BJ (cell line): ENCODE measurements at regions of chr12 and their contacts with region 1.

Region 1: DNA sequence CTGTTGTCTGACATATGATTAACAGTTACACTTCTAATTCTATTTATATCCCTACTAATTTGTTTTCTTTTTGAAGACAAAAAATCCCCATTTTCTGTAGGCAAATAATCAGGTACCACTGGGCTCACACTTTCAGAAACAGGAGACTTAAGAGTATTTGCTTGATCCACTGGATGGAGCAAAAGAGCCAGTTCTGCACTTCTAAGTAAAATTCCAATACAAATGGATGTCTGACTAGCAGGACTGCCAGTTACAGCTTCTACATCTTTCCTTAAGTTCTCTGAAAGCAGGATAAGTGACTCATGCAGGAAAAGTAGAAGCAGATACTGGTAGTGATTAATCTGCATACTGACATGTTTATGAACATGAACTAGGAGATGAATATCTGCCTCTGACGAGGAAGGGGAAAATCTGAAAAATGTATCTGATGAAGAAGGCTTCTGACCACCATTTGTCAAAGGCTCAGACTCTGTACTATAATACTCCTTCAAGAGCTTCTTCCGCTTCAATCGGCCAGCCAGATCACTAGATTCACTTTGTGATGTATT is 73.8 kb upstream of the ANKS1B start:
- DNase-seq: peak; percentile 79
- H3K4me3 ChIP-seq: no peak overlapping the region
- H3K27me3 ChIP-seq: no peaks in the 10 kb centered on the region
- CTCF ChIP-seq: peak; percentile 61

Region 2: DNA sequence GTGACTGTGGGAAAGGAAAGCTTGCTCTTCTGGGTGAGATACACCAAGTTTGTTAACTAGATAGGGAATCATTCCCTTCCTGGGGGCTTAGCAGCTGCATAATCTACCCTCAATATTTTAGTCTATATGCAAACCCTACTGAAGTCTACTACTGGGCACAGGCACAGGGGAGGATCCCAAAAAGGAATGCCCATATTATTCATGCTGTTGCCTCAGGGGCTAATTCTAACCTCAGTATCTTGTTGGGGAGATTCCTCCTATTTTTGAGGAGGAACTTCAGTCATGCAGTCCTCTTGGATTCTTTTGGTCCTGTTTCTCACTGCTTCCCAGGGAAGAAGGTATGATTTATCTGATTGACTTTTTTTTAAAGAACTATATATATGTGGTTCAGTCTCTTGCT is 14.9 kb before region 1 on chr12:
- CTCF ChIA-PET with region 1: interaction called, 11 read pairs
- POLR2A ChIA-PET with region 1: no interaction called
- DNase-seq: no peak
- H3K4me3 ChIP-seq: no peak overlapping the region
- H3K27me3 ChIP-seq: no peaks in the 10 kb centered on the region
- CTCF ChIP-seq: no peak